PC-3 (cell line): ENCODE measurements at regions of chr7 and their contacts with region 1.

Region 1: GRCh38 chr7:23093546-23093945 is 12.0 kb upstream of the KLHL7 start:
- DNase-seq: peak; percentile 66
- ATAC-seq: peak; percentile 88
- H3K4me3 ChIP-seq: peak overlapping the region; percentile 2; the same call in 1 of the 2 replicates
- H3K27ac ChIP-seq: peak overlapping the region; percentile 67
- H3K4me1 ChIP-seq: peaks cover 19% of the 10 kb centered on the region
- H3K27me3 ChIP-seq: no peaks in the 10 kb centered on the region
- CTCF ChIP-seq: no peak

Region 2: DNA sequence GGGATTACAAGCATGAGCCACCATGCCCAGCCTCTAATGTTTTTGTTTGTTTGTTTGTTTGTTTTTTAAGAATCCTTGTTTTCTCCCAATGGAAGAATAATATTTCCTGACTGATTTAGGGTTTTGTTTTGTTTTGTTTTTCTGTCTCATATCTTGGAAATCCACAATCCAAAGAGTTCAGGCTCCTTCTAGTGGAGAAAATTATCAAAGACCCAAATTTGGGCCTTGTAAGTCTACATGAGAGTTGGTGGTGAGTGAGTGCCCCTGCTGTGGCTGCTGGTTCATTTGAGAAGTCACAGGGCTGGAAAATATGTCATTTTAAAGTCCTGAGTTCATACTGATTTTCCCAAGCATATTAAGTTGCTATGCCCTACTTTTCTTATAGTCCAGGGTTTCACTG is 21.5 kb before region 1 on chr7:
- CTCF ChIA-PET with region 1: no interaction called
- POLR2A ChIA-PET with region 1: no interaction called
- intact Hi-C with region 1: loop called (anchors 2 kb)
- DNase-seq: peak; percentile 24
- ATAC-seq: 0 out of 2 replicates have a peak, but pooled peaks have one; percentile 25
- H3K4me3 ChIP-seq: no peak overlapping the region
- H3K27ac ChIP-seq: no peak overlapping the region
- H3K4me1 ChIP-seq: peaks cover 21% of the 10 kb centered on the region
- H3K27me3 ChIP-seq: no peaks in the 10 kb centered on the region
- CTCF ChIP-seq: peak; percentile 44; the same call in 1 of the 2 replicates

Region 3: DNA sequence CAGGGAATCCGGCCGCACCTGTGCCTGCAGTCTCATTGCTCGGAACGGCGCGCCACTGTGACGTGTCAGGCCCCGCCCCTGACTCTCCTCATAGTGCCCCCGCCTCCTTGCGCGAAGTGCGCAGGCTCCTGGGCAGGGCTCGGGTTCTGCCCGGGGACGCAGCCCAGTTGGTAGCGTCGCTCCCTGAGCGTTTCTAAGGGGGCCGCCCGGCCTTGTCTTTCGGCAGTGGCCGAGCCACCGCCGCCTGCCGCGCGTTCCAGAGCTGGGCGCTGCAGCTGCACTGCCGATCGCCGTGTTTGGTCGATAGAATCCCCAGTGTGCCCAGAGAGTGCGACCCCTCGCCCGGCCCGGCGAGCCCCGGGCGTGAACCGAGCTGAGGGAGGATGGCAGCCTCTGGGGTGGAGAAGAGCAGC is 12.1 kb after region 1 on chr7 and contains the start of gene KLHL7:
- CTCF ChIA-PET with region 1: no interaction called
- POLR2A ChIA-PET with region 1: no interaction called
- intact Hi-C with region 1: loop called (anchors 1 kb)
- DNase-seq: peak; percentile 94
- ATAC-seq: peak; percentile 91
- H3K4me3 ChIP-seq: peak within 1 kb of the TSS; percentile 98
- H3K27ac ChIP-seq: peak within 1 kb of the TSS; percentile 50
- H3K4me1 ChIP-seq: peaks cover 14% of the 10 kb centered on the region
- H3K27me3 ChIP-seq: no peaks in the 10 kb centered on the region
- CTCF ChIP-seq: no peak
- total RNA-seq, gene KLHL7: 31.1 and 34.9 TPM in 2 replicates

Region 4: DNA sequence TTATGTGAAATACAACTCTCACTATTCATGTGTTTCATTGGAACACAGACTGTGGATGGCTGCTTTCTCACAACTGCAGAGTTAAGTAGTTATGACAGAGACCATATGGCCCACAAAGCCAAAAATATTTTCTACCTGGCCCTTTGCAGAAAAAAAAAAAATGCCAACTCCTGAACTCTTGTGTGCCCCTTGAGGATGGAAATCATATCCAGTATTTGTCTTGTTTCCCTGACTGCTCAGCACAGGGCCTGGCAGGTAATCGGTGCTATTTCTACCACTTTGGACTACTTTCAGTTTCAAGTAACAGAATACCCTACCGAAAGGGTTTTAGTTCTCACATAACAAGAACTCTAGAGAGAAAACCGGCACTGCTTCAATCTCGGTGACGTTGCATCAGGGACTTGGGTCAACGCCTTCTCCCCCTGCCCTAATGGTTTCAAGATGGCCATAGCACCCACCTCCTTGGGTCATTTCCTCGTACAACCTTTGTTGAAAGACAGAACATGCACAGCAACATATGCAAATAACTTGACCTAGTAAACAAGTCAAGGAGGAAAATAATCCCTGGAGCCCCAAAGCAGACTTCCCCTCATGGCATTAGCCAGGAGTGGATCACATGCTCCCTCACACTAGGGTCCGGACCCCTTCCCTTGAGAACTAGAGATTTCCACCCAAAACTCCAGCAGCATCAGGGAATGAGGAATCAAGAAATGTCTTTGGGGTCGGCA is 141.2 kb after region 1 on chr7:
- CTCF ChIA-PET with region 1: no interaction called
- POLR2A ChIA-PET with region 1: no interaction called
- intact Hi-C with region 1: loop called (anchors 10 kb)
- DNase-seq: no peak
- ATAC-seq: no peak
- H3K4me3 ChIP-seq: no peak overlapping the region
- H3K27ac ChIP-seq: no peak overlapping the region
- H3K4me1 ChIP-seq: peaks cover 11% of the 10 kb centered on the region; the same call in 1 of the 2 replicates
- H3K27me3 ChIP-seq: no peaks in the 10 kb centered on the region
- CTCF ChIP-seq: no peak

Region 5: DNA sequence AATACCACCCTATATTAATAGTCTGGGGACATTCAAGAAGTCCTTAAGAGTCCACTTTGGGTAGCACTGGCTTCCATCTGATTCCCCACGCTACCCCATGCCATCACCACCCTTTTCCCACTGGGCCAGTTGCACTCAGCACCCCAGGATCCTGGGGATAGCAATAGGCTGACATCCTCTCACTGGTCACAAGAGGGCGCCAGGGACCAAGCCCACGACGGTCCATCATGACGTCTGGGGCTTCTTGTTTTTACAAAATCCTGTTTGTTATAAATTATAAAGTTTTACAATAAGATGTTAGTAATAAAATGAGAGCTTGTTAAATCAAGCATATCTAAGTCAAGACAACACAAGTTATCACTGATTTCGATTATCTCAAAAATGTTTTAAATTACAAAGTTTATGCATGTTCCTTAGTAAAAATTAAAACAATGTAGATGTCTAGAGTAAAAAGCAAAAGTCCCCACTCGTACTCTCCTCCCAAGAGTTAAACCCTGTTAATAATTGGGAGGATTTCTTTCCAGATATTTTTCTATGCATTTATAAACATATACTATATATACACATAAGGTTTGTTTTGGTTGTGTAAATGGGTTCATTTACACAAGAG is 168.4 kb after region 1 on chr7:
- CTCF ChIA-PET with region 1: no interaction called
- POLR2A ChIA-PET with region 1: no interaction called
- intact Hi-C with region 1: loop called (anchors 10 kb)
- DNase-seq: peak; percentile 72
- ATAC-seq: peak; percentile 99
- H3K4me3 ChIP-seq: 0 out of 2 replicates have a peak overlapping the region, but pooled peaks have one; percentile 11
- H3K27ac ChIP-seq: no peak overlapping the region
- H3K4me1 ChIP-seq: no peaks in the 10 kb centered on the region
- H3K27me3 ChIP-seq: peaks cover 4% of the 10 kb centered on the region; the same call in 1 of the 2 replicates
- CTCF ChIP-seq: peak; percentile 91